ENCODE measurements at regions of chr11 and their contacts with region 1.

Region 1: DNA sequence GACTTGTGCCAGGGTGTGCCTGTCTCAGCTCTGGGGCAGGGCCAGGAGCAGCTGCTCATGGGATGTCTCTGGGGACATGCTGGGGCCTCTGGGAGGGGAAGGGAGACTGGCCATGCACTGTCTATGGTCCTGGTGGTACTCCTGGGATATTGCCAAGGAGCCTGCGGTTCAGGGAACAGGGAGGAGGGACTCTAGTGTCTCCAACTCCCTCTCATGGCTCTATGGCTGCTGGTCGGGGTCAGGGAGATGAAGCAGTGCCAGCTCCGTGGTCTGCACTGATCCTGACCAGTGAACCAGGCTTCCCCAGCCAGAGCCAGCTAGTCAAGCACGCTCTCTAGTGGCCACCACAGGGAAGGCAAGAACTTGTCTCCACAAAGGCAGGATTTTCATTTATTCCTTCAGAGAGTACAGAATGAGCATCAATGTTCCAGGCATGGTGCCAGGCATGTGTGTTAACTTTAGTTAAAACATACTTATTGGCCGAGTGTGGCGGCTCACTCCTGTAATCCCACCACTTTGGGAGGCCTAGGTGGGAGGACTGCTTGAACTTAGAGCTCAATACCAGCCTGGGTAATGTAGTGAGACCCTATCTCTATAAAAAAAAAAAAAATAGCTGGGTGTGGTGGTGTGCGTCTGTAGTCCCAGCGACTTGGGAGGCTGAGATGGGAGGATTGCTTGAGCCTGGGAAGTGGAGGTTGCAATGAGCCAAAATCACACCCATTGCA is 2.5 kb upstream of the BEST1 start:
- DNase-seq: peak; percentile 91
- ATAC-seq: peak; percentile 79

Region 2: DNA sequence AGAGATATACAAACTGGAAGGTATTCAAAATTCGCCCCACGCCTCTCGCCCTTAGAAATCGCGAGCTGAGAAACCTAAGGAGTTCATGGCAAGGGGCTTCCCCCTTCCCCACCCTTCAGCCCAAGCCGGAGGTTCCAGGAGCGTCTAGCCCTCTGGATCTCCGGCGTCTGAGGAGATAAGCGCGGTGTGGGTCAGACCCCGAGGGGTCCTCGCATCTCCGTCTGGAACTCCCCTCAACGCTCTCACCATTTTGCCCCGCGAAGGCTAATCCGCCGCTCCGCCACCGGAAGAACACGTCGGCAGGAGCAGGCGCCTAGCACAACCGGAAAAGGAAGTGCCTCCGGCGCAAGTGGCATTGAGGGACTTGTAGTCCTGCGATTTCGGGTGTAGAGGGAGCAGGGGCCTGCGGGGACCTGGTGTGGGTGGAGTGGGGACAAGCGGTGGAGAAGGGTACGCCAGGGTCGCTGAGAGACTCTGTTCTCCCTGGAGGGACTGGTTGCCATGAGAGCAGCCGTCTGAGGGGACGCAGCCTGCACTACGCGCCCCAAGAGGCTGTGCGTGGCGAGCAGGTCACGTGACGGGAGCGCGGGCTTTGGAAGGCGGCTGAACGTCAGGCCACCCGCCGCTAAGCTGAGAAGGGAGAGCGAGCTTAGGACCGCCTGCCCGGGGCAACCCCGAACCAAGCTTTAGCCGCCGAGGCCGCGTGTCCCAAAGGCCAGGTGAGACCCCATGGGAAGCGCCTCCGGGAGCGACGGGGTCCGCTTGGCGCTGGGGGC is 155.2 kb before region 1 on chr11 and contains the starts of genes FEN1 and TMEM258:
- intact Hi-C with region 1: loop called (anchors 5 kb)
- DNase-seq: peak; percentile 95
- ATAC-seq: peak; percentile 93
- total RNA-seq, gene FEN1: 7.0 TPM
- total RNA-seq, gene TMEM258: 130 TPM

Region 3: GRCh38 chr11:61871158-61871597 is 76.5 kb before region 1 on chr11:
- intact Hi-C with region 1: loop called (anchors 1 kb)
- DNase-seq: peak; percentile 91
- ATAC-seq: peak; percentile 86

Region 4: DNA sequence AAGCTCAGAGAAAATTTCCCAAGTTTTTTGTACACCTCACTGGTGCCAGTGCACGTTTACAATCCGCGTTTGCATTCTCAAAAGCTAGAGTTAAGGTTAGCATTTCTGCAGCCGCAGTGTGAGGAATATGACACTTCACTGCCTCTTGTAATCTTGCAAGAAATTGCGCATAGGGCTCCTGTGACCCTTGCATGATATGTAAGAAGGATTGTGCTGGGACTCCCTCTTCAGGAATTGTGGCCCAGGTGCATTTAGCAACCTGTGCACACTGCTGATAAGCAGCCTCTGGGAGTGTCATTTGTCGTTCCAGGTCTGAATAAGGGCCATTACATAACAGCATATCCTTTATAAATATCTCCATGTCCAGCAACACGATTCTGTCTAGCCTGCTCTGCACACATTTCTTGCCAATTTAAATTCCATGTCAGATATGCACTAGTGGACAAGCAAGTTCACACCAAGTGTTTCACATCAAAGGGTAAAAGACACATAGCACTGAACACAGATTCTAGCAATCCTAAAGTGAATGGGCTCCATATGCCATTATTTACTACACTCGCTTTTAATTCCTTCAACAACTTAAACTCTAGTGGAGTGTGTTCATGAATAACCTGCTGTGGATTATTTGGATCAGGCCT is 107.0 kb after region 1 on chr11:
- intact Hi-C with region 1: loop called (anchors 10 kb)
- DNase-seq: no peak
- ATAC-seq: no peak

Region 5: DNA sequence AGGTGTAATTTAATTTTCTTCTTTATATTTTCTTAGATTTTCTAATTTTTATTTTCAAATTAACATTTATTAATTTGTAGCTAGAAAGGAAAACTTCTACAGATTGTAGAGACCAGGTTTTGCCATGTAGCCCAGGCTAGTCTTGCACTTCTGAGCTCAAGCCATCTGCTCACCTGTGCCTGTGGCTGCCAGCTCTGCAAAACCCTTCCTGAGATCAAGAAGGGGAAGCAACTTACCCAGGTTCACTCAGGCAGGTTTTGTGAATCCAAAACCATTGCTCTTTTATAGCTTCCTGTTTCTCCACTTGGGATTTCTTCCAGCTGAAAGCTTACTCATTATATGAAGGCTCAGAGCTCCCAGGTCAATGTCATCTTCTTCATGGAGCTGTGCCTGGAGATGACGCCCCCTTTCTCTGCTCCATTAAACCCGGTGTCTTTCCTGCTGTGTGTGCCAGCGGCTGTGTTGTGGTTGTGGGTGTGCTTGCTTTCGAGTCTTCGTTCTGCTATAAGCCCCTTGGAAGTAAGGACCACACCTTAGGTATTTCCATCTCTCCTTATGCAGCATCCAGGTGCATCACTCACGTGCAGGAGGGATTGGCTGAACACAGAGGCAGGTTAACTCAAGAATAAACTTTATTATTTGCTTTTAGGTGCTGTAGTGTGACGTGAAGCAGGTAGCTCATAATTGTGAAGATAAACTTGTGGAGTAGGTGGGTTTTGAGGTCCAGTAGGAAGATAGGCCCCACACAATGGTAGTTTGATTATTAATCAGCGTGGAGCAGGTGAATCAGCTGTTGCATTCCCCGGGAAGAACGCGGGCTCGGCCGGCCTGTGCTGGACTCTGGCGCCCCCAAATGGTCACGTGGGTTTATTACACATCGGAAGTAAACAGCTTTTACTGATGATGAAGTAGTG is 134.0 kb after region 1 on chr11:
- intact Hi-C with region 1: loop called (anchors 2 kb)
- DNase-seq: peak; percentile 92
- ATAC-seq: peak; percentile 74

Measured in Right ventricle myocardium inferior (tissue), 1 donor.